AG04450 (cell line): ENCODE measurements at regions of chr11 and their contacts with region 1.

Region 1: DNA sequence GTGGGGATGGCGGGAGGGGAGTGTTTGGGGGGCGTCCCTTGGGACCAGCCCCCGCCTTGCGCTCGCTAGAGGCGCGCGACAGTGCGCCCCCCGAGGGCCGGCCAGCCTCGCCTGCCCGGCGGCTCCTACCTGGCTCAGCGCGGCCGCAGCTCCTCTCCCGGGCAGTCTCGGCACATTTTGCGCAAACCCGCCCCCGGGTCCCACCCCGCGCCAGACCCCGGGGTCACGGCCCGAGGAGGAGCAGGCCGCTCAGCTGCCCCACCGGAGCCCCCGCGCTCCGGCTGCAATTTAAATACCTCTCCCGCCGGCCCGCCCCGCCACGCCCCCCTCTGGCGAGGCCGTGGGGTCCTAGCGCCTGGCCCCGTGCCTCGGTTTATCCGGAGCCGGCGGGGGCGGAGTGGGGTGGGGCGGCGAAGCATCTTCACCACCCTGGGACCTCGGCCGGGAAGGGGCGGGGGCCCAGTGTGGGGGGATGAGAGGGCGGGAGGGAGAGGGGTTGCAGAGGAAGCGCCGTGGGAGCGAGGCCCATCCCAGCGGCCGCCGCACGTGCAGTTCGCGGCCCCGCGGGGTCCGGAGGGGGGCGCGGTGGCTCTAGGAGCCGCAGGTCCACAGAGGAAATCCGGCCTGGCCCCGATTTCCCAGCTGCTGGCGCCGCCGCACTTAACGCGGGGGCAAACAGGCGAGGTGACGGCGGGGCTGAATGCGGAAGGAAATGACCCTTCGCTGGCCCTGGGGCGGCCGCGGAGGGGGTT is at the start of gene LRRC32:
- DNase-seq: no peak
- H3K4me3 ChIP-seq: peak within 1 kb of the TSS; percentile 63
- H3K27ac ChIP-seq: peak within 1 kb of the TSS; percentile 47
- H3K27me3 ChIP-seq: no peaks in the 10 kb centered on the region
- CTCF ChIP-seq: no peak
- polyA plus RNA-seq, gene LRRC32: 10.9 and 14.2 TPM in 2 replicates

Region 2: DNA sequence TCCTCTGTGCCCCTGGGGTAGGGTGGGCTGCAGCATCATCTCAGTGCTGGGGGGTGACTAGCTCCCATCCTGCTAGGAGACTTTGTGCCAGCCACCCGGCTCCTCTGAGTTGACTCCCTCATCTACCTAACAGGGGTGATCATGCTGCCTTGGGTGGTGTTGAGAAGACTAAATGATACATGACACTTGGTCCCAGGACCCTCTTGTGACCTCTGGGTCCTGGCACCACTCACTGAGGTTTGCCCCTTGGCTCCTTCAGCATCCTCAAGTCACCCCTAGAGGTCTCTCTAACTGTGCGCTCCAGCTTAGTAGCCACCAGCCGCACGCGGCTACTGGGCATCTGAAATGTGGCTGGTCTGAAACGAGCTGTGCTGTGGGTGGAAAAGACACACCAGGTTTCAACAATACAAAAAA is 72.2 kb before region 1 on chr11:
- CTCF ChIA-PET with region 1: interaction called, 10 read pairs
- POLR2A ChIA-PET with region 1: no interaction called
- DNase-seq: no peak
- H3K4me3 ChIP-seq: no peak overlapping the region
- H3K27ac ChIP-seq: no peak overlapping the region
- H3K27me3 ChIP-seq: no peaks in the 10 kb centered on the region
- CTCF ChIP-seq: peak; percentile 62

Region 3: GRCh38 chr11:76654298-76654851 is 16.3 kb before region 1 on chr11:
- CTCF ChIA-PET with region 1: no interaction called
- POLR2A ChIA-PET with region 1: interaction called, 11 read pairs
- DNase-seq: peak; percentile 95
- H3K4me3 ChIP-seq: no peak overlapping the region
- H3K27ac ChIP-seq: peak overlapping the region; percentile 97
- H3K27me3 ChIP-seq: peaks cover 3% of the 10 kb centered on the region
- CTCF ChIP-seq: no peak